ENCODE measurements at regions of chr5 and their contacts with region 1.

Region 1: GRCh38 chr5:34522599-34523386 is 133.3 kb upstream of the RAI14 start:
- DNase-seq: peak; percentile 72
- CTCF ChIP-seq: peak; percentile 69

Region 2: DNA sequence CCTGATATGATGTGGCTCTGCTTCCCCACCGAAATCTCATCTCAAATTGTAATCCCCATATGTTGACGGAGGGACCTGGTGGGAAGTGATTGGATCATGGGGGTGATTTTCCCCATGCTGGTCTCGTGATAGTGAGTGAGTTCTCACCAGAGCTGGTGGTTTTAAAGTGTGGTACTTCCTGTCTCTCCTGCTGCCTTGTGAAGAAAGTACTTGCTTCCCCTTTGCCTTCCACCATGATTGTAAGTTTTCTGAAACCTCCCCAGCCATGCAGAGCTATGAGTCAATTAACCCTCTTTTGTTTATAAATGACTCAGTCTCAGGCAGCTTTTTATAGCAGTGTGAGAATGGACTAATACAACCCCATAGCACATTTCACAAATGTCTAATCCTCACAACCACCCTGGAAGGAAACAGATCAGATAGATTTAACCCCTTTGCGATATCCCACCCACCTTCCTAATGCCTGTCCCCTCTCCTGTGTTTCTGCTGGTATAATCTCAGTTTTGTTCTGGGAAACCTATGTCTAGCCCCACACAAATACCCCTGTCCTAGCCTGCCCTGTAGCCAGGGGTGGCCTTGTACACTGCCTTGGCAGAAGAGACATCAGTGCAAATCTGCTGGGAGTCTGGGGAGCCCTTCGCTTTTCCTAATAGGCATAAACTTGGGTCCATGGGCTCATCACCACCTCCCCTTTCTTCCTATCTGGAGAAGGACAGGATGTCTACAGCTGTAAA is 23.6 kb before region 1 on chr5:
- CTCF ChIA-PET with region 1: interaction called, 15 read pairs
- POLR2A ChIA-PET with region 1: no interaction called
- DNase-seq: peak; percentile 37
- CTCF ChIP-seq: no peak

Region 3: GRCh38 chr5:34511915-34512314 is 10.9 kb before region 1 on chr5:
- CTCF ChIA-PET with region 1: interaction called, 36 read pairs
- POLR2A ChIA-PET with region 1: no interaction called
- DNase-seq: no peak
- CTCF ChIP-seq: no peak

Region 4: GRCh38 chr5:34533582-34534522 is 11.1 kb after region 1 on chr5:
- CTCF ChIA-PET with region 1: interaction called, 56 read pairs
- POLR2A ChIA-PET with region 1: no interaction called
- DNase-seq: no peak
- CTCF ChIP-seq: no peak

Region 5: GRCh38 chr5:34915139-34915855 is 392.5 kb after region 1 on chr5 and contains the starts of genes BRIX1 and RAD1:
- CTCF ChIA-PET with region 1: interaction called, 18 read pairs
- POLR2A ChIA-PET with region 1: no interaction called
- DNase-seq: peak; percentile 92
- CTCF ChIP-seq: no peak